ENCODE measurements at regions of chr17 and their contacts with region 1.

Region 1: DNA sequence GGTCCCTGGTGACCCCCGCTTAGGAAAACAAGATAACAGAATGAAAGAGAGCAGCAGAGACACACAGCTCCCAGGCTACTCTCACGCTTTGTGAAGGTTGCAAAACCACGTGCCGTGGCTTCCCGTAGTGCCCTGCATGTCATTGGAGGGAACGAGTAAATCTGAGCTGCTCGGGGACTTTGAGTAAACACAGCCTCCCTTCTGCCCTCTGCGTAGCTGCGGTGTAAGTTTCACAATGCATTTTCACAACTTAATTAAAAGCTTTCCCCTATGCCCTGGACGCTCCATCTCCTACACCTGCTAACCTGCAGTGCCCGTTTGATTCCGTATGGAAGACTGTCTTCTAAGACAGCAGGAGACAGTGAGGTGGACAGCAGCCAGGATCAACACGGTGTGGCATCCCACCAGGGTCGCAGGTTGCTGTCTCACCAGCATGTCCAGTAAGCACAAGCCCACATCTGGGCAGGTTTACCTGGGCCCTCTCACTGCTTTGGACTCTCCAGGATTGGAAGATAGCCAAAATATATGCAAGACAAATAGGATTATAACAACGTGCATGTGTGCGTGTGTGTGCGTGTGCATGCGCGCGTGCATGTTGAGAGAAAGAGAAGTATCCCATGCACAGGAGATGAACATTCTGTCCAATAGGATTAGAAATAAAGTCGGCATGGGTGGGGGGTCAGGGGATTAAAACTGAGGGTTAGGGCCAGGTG is 116.4 kb upstream of the RCVRN start:
- DNase-seq: peak; percentile 36 to 64
- ATAC-seq: peak in 2 of 4 donors; percentile 39 to 72
- H3K4me3 ChIP-seq: no peak overlapping the region
- H3K27ac ChIP-seq: no peak overlapping the region
- H3K4me1 ChIP-seq: peaks cover 3% of the 10 kb centered on the region
- H3K27me3 ChIP-seq: no peaks in the 10 kb centered on the region
- CTCF ChIP-seq: no peak

Region 2: DNA sequence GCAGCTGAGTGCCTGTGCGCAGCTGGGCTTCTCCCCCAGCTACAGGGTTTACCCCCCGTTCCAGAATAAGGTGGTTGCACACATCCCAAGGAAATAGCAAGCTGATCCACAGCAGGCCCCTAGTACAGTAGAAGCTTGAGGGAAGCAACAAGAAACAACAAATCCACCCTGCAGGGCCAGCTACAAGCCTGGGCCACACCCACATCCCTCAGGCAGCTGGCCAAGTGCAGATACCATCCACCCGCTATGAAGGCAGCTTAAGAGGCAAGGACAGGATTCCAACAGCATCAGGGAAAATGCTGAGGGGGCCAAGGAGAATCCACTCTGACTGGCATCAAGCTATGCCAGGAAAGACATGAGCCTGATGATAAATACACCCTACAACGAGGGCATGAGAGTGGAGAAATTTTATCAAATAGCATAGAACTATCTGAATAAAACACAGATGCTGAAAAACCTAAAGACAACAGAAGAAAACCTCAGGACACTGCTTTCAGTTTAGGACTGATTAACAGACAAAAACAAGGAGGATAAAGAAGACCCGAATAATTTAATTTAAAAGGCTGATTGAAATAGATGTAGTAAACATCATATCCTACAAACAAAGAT is 49.3 kb before region 1 on chr17:
- intact Hi-C with region 1: loop called in 1 of 2 experiments (anchors 10 kb)
- DNase-seq: peak; percentile 72 to 75
- ATAC-seq: peak in 1 of 4 donors; percentile 52
- H3K4me3 ChIP-seq: no peak overlapping the region
- H3K27ac ChIP-seq: no peak overlapping the region
- H3K4me1 ChIP-seq: no peaks in the 10 kb centered on the region
- H3K27me3 ChIP-seq: no peaks in the 10 kb centered on the region
- CTCF ChIP-seq: no peak

Region 3: DNA sequence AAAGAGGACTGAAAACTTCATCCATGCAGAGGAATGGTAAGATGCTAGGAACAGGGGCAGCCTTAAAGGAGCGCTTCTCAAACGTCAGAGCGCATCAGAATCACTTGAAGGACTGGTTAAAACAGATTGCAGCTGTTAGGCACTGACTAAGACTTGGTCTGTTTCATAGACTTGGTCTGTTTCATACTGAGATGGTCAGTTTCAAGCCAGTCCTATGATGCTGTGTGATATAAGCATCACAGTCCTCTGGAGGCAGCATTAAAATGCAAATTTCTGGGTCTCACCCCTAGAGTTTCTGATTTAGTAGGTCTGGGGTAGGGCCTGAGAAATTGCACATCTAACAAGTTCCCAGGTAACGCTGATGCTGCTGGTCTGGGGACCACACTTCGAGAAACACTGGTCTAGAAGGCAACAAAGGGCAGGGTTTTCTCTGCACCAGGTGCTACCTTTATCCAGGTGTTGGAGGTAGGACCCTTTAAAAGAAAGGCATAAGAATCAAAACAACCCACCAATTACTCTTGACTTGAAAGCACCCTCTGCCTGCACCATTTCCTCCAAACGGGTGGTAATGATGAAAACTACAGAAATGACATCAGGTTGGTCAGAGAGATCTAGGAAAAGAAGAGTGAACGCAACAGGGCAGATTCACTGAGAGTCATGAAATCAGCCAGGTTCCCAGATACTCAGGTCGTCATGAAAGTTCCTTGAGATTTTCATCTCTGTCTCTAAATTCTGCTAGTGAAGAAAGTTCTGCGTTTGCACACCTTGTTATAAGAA is 21.3 kb before region 1 on chr17:
- intact Hi-C with region 1: no loop called
- DNase-seq: no peak
- ATAC-seq: no peak
- H3K4me3 ChIP-seq: no peak overlapping the region
- H3K27ac ChIP-seq: no peak overlapping the region
- H3K4me1 ChIP-seq: no peaks in the 10 kb centered on the region
- H3K27me3 ChIP-seq: peaks cover 0 to 3% (median 0%) of the 10 kb centered on the region in 3 donors
- CTCF ChIP-seq: no peak

Region 4: DNA sequence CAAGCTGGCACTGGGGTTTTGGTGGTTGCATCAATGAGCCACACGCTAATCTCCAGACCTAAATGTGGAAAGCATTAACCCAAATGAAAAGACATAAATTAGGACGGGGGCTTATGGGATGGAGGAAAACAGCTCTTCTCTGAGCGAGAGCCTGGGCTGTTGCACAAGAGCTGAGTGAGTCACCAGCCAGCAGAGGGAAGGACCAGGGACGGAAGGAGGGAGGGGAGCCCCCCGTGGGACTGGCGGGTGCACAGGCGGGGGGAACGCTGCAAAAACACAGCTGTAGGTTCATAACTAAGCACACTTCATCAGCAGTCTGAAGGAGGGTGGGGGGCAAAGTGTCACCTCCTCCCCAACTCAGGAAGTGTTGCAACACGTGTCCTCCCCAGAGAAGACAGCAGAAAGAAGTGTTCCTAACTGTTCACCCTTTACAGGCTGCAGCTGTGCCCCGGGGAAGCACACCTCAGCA is 93.7 kb after region 1 on chr17:
- intact Hi-C with region 1: loop called in 1 of 2 experiments (anchors 10 kb)
- DNase-seq: peak; percentile 94 to 96
- ATAC-seq: peak; percentile 85 to 90 (median 86)
- H3K4me3 ChIP-seq: no peak overlapping the region
- H3K27ac ChIP-seq: peak overlapping the region; percentile 61
- H3K4me1 ChIP-seq: peaks cover 4% of the 10 kb centered on the region
- H3K27me3 ChIP-seq: peaks cover 0 to 6% (median 1%) of the 10 kb centered on the region in 3 donors
- CTCF ChIP-seq: no peak

Region 5: DNA sequence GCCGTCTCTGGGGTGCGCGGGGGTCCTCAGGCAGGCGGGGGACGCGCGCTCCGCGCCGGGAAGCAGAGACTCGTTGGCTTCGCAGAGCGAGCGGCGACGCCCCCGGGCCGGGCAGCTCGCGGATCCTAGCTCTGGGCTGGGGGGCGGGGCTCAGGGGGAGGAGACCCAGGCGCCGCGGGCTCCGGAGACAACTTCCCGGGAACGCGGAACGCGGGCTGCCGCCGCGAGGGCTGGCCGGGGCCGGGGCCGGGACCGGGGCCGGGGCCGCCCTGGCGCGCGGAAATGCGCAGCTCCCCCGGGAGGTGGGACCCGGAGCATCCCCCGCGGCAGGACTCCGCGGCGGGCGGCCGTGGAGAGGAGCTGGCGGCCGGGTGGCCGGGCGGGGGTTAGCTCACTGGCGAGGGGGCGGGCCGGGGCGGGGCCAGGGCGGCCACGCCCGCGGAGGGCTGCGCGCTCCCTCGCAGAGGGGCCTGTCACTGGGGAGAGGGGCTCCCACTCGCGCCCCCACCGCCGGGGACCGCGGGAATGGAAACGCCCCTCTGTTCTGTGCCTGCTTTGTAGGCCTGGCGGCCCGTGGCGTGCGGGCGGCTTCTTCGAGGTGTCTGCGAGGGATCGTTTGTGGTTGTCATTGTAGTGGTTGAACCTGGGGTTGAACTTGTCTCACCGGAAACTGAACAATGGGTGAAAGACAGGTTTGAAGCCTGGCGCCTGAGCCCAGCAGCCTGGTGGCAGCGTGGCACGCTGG is 177.3 kb after region 1 on chr17 and contains the start of gene GAS7:
- intact Hi-C with region 1: loop called in 1 of 2 experiments (anchors 10 kb)
- DNase-seq: peak; percentile 77 to 81
- ATAC-seq: peak in 3 of 4 donors; percentile 29 to 54 (median 35)
- H3K4me3 ChIP-seq: peak within 1 kb of the TSS; percentile 63
- H3K27ac ChIP-seq: no peak within 1 kb of the TSS
- H3K4me1 ChIP-seq: no peaks in the 10 kb centered on the region
- H3K27me3 ChIP-seq: peaks cover 0 to 33% (median 20%) of the 10 kb centered on the region in 3 donors
- CTCF ChIP-seq: no peak
- total RNA-seq, gene GAS7: 7.0 to 16.9 (median 9.6) TPM